Thyroid gland (tissue), 4 donors: ENCODE measurements at regions of chr3 and their contacts with region 1.

Region 1: DNA sequence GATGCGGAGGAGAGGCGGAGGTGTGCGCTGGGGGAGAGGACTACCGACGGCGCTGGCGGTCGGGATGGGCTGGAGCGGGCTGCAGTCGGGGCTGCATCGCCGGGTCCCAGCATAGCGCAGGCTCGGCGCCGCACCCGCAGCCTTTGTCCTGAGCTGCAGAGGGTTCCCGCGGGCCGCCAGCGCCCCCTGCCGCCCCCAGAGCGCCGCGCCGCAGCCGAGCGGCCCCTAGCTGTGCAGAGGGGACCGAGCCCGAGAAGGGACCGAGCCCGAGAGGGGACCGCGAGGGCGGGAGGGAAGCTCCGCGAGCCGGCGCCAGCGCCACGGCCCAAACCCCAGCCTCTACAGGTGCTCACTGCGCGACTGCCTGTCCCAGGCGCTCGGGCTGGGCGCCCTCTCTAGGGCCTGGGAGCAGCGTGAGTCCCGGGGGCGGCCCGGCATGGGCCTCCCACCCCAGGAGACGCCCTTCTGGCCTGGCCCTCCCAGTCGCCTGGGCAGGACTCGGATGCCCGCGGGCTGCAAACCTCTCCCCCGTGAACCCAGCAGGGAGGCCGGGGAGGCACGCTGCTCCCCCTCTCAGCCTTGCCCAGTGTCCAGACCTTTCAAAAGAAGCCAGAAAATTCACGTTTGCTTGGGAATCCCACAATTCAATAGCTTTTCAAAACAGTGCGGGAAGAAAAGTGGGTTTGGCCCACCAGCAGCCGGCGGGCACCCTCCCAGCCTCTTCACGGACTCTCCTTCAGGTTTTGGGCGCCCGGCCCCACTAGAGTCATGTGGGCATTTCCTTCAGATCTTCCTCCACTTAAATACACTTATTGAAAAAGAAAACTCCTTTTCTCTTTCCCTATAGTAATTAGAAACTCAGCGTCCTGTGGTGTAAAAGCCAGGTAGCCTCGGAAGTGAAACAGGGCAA is 134.7 kb downstream of the TPRA1 start:
- DNase-seq: peak; percentile 73 to 74
- H3K4me3 ChIP-seq: no peak overlapping the region
- H3K27ac ChIP-seq: no peak overlapping the region
- H3K4me1 ChIP-seq: peaks cover 4 to 22% of the 10 kb centered on the region in 2 donors
- H3K27me3 ChIP-seq: peaks cover 17% of the 10 kb centered on the region
- CTCF ChIP-seq: peak; percentile 53 to 97 (median 91)
- POLR2A ChIP-seq: no peak

Region 2: DNA sequence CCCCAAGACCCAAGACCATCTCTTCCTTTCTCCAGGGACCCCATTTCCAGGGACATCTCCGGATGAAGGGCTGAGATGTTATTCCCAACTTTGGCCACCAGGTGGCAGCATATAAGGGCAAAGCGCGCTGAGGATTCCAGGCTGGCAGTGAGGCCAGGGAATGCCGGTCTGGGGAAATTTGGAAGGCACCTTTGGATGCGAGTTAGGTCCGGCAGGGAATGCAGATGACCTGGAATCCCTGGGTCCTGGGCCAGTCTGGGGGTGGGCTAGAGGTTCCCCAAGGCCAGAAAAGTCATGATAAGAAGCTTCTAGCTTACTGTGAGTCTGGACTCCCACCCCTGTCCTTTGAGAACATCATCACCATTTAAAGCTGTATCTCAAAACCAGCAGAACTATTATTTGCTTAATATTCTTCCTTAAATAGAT is 933.4 kb before region 1 on chr3:
- intact Hi-C with region 1: loop called (anchors 5 kb)
- DNase-seq: peak; percentile 53 to 57
- H3K4me3 ChIP-seq: no peak overlapping the region
- H3K27ac ChIP-seq: no peak overlapping the region
- H3K4me1 ChIP-seq: peaks cover 0 to 8% of the 10 kb centered on the region in 2 donors
- H3K27me3 ChIP-seq: no peaks in the 10 kb centered on the region
- CTCF ChIP-seq: peak; percentile 70 to 98 (median 83)
- POLR2A ChIP-seq: no peak

Region 3: GRCh38 chr3:126982471-126983175 is 473.2 kb before region 1 on chr3 and contains the start of gene PLXNA1:
- intact Hi-C with region 1: loop called (anchors 10 kb)
- DNase-seq: peak; percentile 64 to 66
- H3K4me3 ChIP-seq: peak within 1 kb of the TSS; percentile 62 to 78 (median 68)
- H3K27ac ChIP-seq: peak within 1 kb of the TSS in 2 of 3 donors; percentile 62 to 75
- H3K4me1 ChIP-seq: peaks cover 14 to 40% of the 10 kb centered on the region in 2 donors
- H3K27me3 ChIP-seq: no peaks in the 10 kb centered on the region
- CTCF ChIP-seq: peak; percentile 60 to 84 (median 78)
- POLR2A ChIP-seq: peak in 1 of 2 donors; percentile 56
- total RNA-seq, gene PLXNA1: 16.0 to 28.0 (median 22.8) TPM

Region 4: GRCh38 chr3:127490271-127491023 is 34.7 kb after region 1 on chr3:
- intact Hi-C with region 1: no loop called
- DNase-seq: no peak
- H3K4me3 ChIP-seq: no peak overlapping the region
- H3K27ac ChIP-seq: no peak overlapping the region
- H3K4me1 ChIP-seq: no peaks in the 10 kb centered on the region
- H3K27me3 ChIP-seq: no peaks in the 10 kb centered on the region
- CTCF ChIP-seq: no peak
- POLR2A ChIP-seq: no peak

Region 5: DNA sequence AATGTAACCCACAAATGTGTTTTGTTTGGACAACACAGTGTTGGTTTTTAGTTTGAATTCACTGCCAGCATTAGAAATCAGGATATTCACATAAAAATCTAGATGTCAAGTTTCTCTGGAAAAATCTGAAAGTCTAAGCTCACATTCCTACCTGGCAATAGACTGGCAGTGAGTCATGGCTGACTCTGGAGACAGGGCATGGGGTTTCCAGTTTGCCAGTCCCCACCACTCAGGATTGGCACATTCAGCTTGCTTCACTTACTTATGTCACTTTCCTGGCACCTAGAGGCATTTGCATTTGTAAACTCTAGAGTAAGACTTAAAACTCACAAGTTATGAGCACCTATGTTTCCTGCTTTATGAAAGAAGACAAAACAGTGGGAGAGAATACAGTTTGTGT is 577.3 kb after region 1 on chr3:
- intact Hi-C with region 1: no loop called
- DNase-seq: no peak
- H3K4me3 ChIP-seq: no peak overlapping the region
- H3K27ac ChIP-seq: no peak overlapping the region
- H3K4me1 ChIP-seq: no peaks in the 10 kb centered on the region
- H3K27me3 ChIP-seq: no peaks in the 10 kb centered on the region
- CTCF ChIP-seq: no peak
- POLR2A ChIP-seq: no peak